WTC11 (cell line): ENCODE measurements at regions of chr20 and their contacts with region 1.

Region 1: DNA sequence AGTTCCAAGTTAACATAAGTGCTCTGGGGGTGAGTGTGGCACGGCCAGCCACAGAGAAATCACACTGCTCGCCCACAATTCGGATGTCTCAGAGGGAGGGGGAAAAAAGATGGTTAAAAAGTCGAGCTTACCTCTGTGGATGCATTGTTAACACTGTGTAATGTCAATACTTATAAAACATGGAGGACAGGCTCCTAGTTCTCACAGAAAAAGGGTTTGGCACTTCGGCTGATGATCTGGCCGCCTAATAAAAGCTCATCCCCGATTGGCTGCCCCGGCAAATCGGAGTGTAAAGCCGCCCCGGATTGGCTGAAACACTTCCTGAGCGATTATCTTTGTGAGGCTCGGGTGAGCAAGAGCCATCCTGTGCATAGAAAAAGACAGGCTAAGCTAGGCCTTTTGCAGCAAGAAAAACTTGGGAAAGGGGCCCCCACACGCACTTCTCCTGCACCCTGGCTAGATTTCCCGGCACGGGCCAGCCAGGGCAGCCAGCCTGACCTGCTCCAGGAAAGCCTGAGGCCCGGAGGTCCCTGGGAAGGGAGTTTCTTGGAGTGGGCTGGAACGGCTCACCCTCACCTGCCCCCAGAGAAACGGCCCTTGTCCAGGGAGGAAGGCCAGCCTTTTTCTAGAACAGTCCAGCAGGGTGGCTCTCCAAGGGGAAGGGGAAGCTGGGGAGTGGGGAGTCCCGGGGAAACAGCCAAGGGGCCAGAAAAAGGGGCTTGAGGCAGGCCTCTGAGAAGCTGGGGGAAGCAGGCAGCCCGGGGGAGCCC is at the start of gene ZMYND8:
- DNase-seq: peak; percentile 85
- ATAC-seq: peak; percentile 38
- H3K4me3 Mint-ChIP-seq: peak within 1 kb of the TSS; percentile 56
- H3K27ac Mint-ChIP-seq: peak within 1 kb of the TSS; percentile 100
- H3K4me1 Mint-ChIP-seq: no peaks in the 10 kb centered on the region; the same call in 1 of the 2 replicates
- H3K27me3 Mint-ChIP-seq: no peaks in the 10 kb centered on the region
- CTCF ChIP-seq: no peak
- total RNA-seq, gene ZMYND8: 114 to 149 TPM (median 127 TPM) in 3 replicates

Region 2: DNA sequence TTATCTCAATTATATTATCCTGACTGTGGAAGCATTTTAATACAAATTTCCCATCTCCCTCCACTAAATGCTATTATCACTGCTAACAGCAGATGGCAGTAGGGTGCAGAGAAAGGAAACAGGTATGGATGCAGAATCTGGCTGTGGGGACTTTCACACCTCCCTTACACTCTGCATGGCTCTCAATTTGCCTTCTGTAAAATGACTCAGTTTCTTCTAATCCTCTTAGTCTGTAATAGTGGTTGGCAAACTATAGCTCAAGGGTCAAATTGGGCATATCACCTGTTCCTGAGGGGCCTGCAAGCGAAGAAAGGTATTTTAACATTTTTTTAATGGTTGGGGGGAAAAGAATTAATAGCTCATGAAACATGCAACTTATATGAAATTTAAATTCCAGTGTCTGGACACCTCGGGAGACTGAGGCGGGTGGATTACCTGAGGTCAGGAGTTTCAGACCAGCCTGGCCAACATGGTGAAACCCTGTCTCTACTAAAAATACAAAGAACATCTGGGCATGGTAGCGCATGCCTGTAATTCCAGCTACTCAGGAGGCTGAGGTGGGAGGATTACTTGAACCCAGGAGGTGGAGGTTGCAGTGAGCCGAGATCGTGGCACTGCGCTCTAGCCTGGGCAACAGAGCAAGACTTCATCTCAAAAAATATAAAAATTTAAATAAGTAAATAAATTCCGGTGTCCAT is 83.7 kb before region 1 on chr20:
- CTCF ChIA-PET with region 1: interaction called, 17 read pairs
- POLR2A ChIA-PET with region 1: interaction called, 4 read pairs
- DNase-seq: peak; percentile 28
- ATAC-seq: peak; percentile 79
- H3K4me3 Mint-ChIP-seq: no peak overlapping the region
- H3K27ac Mint-ChIP-seq: peak overlapping the region; percentile 89
- H3K4me1 Mint-ChIP-seq: peaks cover 29% of the 10 kb centered on the region
- H3K27me3 Mint-ChIP-seq: no peaks in the 10 kb centered on the region
- CTCF ChIP-seq: peak; percentile 73

Region 3: DNA sequence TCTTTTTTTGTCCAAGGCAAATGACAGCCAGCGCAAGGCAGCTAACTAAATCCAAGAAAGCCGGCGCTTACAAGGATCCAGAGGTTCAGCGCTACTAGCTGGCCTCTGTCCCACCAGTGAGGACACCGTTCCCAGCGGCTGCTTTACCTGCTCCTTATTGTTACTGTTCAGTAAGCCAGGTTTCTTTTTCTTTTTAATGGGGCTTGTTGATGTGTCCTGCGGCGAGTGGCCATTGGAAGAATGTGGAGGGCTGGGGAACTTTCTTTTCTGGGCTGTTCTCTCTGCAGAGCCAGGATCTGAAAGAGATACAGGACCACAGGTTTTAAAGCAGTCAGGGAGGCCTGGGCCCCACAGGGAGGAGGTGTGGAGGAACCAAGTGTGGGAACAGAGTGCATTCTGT is 46.8 kb before region 1 on chr20:
- CTCF ChIA-PET with region 1: interaction called, 4 read pairs
- POLR2A ChIA-PET with region 1: interaction called, 140 read pairs
- DNase-seq: peak; percentile 14
- ATAC-seq: peak; percentile 40
- H3K4me3 Mint-ChIP-seq: no peak overlapping the region
- H3K27ac Mint-ChIP-seq: peak overlapping the region; percentile 89
- H3K4me1 Mint-ChIP-seq: peaks cover 58% of the 10 kb centered on the region
- H3K27me3 Mint-ChIP-seq: no peaks in the 10 kb centered on the region
- CTCF ChIP-seq: no peak

Region 4: DNA sequence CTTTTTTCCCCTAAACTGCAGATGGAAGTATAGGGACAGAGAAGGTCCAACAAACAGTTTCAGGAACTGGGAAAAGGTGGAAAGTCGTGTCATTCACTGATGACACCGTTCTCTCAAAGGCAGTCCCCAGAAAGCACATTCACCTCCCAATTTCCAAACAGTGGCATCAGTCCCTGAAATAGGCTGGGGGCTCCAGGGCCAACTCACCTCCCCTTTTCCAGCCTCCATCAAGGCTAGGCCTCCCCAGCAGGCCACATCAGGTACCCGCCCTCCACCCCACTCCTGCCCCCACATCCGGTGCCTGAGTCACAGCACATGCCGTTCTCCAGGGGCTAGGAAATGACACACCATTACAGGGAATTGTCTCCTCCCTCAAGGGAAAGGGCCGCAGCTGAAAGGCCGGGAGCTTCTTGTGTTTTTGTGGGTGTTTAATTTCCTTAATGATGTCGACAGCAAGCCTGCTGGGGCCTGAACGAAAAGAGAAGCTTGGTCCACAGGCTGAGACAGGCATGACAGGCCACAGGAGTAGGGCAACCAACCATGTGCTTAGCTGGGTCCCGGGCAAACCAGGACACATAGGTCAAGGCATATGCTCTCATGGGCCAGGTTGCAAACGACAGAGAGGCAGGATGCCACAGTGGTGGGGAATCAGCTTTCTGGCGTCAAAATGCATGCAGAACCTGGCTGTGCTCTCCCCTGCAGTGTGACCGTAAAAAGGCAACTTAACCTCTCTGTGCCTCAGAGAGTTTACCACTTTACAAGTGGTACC is 39.4 kb before region 1 on chr20:
- CTCF ChIA-PET with region 1: interaction called, 9 read pairs
- POLR2A ChIA-PET with region 1: interaction called, 140 read pairs
- DNase-seq: peak; percentile 26
- ATAC-seq: peak; percentile 1; the same call in 1 of the 2 replicates
- H3K4me3 Mint-ChIP-seq: peak overlapping the region; percentile 59
- H3K27ac Mint-ChIP-seq: peak overlapping the region; percentile 100
- H3K4me1 Mint-ChIP-seq: peaks cover 89% of the 10 kb centered on the region
- H3K27me3 Mint-ChIP-seq: no peaks in the 10 kb centered on the region
- CTCF ChIP-seq: no peak

Region 5: GRCh38 chr20:47370850-47371676 is 14.4 kb after region 1 on chr20:
- CTCF ChIA-PET with region 1: interaction called, 14 read pairs
- POLR2A ChIA-PET with region 1: interaction called, 15 read pairs
- DNase-seq: peak; percentile 41
- ATAC-seq: peak; percentile 56
- H3K4me3 Mint-ChIP-seq: no peak overlapping the region
- H3K27ac Mint-ChIP-seq: peak overlapping the region; percentile 88
- H3K4me1 Mint-ChIP-seq: peaks cover 54% of the 10 kb centered on the region
- H3K27me3 Mint-ChIP-seq: no peaks in the 10 kb centered on the region
- CTCF ChIP-seq: no peak